ENCODE measurements at regions of chr6 and their contacts with region 1.

Region 1: GRCh38 chr6:169789982-169790927 is 38.8 kb downstream of the ERMARD start:
- DNase-seq: peak; percentile 80
- H3K4me3 Mint-ChIP-seq: peak overlapping the region; percentile 79
- H3K27ac Mint-ChIP-seq: no peak overlapping the region
- H3K4me1 Mint-ChIP-seq: peaks cover 17% of the 10 kb centered on the region
- H3K27me3 Mint-ChIP-seq: peaks cover 24% of the 10 kb centered on the region

Region 2: GRCh38 chr6:169188475-169188874 is 601.8 kb before region 1 on chr6:
- CTCF ChIA-PET with region 1: no interaction called
- intact Hi-C with region 1: no loop called
- DNase-seq: peak; percentile 28
- H3K4me3 Mint-ChIP-seq: no peak overlapping the region
- H3K27ac Mint-ChIP-seq: no peak overlapping the region
- H3K4me1 Mint-ChIP-seq: peaks cover 3% of the 10 kb centered on the region
- H3K27me3 Mint-ChIP-seq: peaks cover 3% of the 10 kb centered on the region

Region 3: DNA sequence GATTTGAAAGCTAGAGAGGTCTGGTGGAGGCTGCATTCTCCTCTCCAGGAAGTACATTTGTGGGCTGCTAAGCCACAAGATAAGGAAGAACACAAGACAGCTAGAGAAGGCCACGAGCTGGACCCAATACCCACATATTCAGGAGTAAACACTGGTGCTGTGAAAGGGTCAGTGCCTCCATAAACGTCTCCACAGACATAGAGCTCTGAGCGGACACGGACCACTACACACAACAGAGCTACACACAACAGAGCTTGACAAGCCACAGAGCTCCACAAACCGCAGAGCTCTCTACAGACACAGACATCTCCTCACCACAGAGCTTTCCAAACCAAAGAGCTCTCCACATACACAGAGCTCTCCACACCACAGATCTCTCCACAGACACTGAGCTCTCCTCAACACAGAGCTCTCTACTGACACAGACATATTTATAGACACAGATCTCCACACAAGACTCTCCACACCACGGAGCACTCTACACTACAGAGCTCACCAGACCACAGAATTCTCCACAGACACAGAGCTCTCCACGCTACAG is 13.1 kb after region 1 on chr6:
- CTCF ChIA-PET with region 1: interaction called, 48 read pairs
- intact Hi-C with region 1: no loop called
- DNase-seq: no peak
- H3K4me3 Mint-ChIP-seq: no peak overlapping the region
- H3K27ac Mint-ChIP-seq: no peak overlapping the region
- H3K4me1 Mint-ChIP-seq: peaks cover 50% of the 10 kb centered on the region
- H3K27me3 Mint-ChIP-seq: peaks cover 30% of the 10 kb centered on the region

Region 4: GRCh38 chr6:169886631-169887227 is 96.5 kb after region 1 on chr6:
- CTCF ChIA-PET with region 1: no interaction called
- intact Hi-C with region 1: no loop called
- DNase-seq: no peak
- H3K4me3 Mint-ChIP-seq: no peak overlapping the region
- H3K27ac Mint-ChIP-seq: no peak overlapping the region
- H3K4me1 Mint-ChIP-seq: no peaks in the 10 kb centered on the region
- H3K27me3 Mint-ChIP-seq: peaks cover 2% of the 10 kb centered on the region

Region 5: DNA sequence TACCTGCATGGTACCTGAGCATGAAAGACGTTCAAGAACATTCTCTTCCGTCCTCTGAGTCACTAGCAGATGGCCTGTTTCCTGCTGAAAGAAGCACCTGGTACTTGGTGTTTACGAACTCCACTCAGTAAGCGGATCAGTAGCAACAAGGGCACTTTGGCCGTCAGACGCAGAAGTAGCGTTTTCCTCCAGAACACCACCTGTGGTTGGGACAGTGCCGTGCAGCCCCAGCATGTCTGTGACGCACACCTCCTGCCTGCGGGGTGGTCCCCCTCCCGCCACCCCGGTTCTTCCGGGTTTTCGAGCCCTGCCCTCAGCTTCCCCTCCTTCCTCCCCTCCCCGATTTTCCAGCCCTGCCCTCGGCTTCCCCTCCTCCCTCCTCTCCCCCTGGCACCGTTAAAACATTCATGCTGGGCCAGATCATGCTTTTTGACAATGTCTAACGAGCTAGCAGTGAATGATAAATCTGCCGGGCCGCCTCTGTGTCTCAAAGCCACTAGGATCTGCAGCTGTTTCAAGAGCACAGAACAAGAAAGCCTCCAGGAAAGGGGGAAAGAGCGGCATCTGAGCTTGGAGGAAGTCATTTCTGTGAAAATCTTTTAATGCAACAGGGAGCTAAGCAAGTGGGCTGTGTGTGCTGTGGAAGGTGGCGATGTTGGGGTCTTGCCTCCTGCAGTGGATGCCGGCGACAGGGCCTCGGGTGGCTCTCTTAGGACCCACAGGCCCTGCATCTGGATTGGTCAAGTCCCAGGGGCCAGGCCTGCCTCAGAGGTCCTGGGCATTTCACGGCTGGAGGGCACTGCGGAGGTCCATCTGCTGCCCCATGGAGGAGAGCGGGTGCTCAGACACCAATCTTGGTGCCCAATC is 169.1 kb after region 1 on chr6:
- CTCF ChIA-PET with region 1: interaction called, 3 read pairs
- intact Hi-C with region 1: loop called (anchors 5 kb)
- DNase-seq: peak; percentile 79
- H3K4me3 Mint-ChIP-seq: peak overlapping the region; percentile 21
- H3K27ac Mint-ChIP-seq: peak overlapping the region; percentile 68
- H3K4me1 Mint-ChIP-seq: peaks cover 20% of the 10 kb centered on the region
- H3K27me3 Mint-ChIP-seq: peaks cover 5% of the 10 kb centered on the region

Region 6: GRCh38 chr6:170529839-170530469 is 739.7 kb after region 1 on chr6:
- CTCF ChIA-PET with region 1: interaction called, 11 read pairs
- intact Hi-C with region 1: loop called (anchors 1 kb)
- DNase-seq: peak; percentile 84
- H3K4me3 Mint-ChIP-seq: no peak overlapping the region
- H3K27ac Mint-ChIP-seq: no peak overlapping the region
- H3K4me1 Mint-ChIP-seq: no peaks in the 10 kb centered on the region
- H3K27me3 Mint-ChIP-seq: no peaks in the 10 kb centered on the region